SK-N-SH (cell line): ENCODE measurements at regions of chr2 and their contacts with region 1.

Region 1: DNA sequence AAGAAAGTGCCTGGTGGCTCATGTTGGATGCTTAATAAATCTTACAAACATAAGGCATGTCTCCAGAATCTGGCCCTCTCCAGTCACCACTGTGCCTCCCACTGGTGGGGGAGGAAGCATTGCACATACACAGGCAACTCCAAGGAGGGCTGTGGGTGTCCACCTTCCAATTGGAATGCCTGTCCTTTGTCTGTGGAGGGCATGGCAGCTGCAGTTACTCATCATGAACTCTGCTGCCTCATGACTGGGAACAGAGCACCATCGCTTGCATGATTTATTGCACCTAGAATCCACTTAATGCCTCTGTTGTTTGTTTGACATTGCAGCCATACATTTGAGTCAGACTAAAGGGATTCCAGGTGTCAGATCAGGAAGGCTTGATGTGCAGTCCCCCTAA is 278.9 kb downstream of the PRKCE start:
- DNase-seq: no peak
- H3K4me3 ChIP-seq: no peak overlapping the region
- H3K27ac ChIP-seq: peak overlapping the region in 1 of 2 experiments; percentile 31; a peak in 2 of 4 replicates
- H3K4me1 ChIP-seq: peaks cover 0 to 21% of the 10 kb centered on the region in 2 experiments; a peak in 1 of 4 replicates
- H3K27me3 ChIP-seq: no peaks in the 10 kb centered on the region
- CTCF ChIP-seq: no peak
- EP300 ChIP-seq: peak; percentile 75 to 79
- RAD21 ChIP-seq: peak; percentile 16

Region 2: GRCh38 chr2:45643543-45644542 is 286.6 kb before region 1 on chr2:
- CTCF ChIA-PET with region 1: interaction called, 64 read pairs
- POLR2A ChIA-PET with region 1: no interaction called
- DNase-seq: peak; percentile 98
- H3K4me3 ChIP-seq: peak overlapping the region; percentile 70 to 75
- H3K27ac ChIP-seq: no peak overlapping the region
- H3K4me1 ChIP-seq: peaks cover 0 to 10% of the 10 kb centered on the region in 2 experiments; a peak in 1 of 4 replicates
- H3K27me3 ChIP-seq: peaks cover 12% of the 10 kb centered on the region; the same call in 1 of the 2 replicates
- CTCF ChIP-seq: peak; percentile 92
- EP300 ChIP-seq: no peak
- RAD21 ChIP-seq: peak; percentile 99

Region 3: DNA sequence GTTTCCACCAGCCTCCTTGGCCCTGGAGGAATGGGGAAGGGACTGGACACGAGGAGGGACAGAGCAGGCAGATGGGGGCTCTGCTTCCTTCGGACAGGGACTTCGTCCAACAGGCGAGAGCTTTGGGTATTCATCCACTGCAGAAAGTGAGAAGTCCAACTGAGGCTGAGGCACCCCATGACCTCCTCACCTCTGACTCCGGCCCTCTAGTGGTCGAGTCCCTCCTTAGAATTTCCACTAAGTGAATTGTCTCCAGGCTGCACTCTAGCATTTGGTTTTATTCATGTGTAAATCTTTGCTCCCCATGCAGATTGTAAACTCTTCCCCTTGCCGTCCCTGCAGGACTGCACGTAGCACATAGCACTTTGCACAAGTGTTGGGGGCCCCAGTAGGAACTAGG is 624.6 kb after region 1 on chr2:
- CTCF ChIA-PET with region 1: no interaction called
- POLR2A ChIA-PET with region 1: no interaction called
- DNase-seq: peak; percentile 28
- H3K4me3 ChIP-seq: no peak overlapping the region
- H3K27ac ChIP-seq: no peak overlapping the region
- H3K4me1 ChIP-seq: peaks cover 0 to 21% of the 10 kb centered on the region in 2 experiments; a peak in 1 of 4 replicates
- H3K27me3 ChIP-seq: no peaks in the 10 kb centered on the region
- CTCF ChIP-seq: peak; percentile 59
- EP300 ChIP-seq: no peak
- RAD21 ChIP-seq: peak; percentile 28; the same call in 1 of the 2 replicates